ENCODE measurements at regions of chr17 and their contacts with region 1.

Region 1: GRCh38 chr17:19377602-19378392 is 501 bp upstream of the MAPK7 start:
- DNase-seq: peak; percentile 99
- ATAC-seq: peak; percentile 92
- H3K4me3 ChIP-seq: peak overlapping the region; percentile 78
- H3K27ac ChIP-seq: peak overlapping the region; percentile 84
- H3K4me1 ChIP-seq: peaks cover 15% of the 10 kb centered on the region
- H3K27me3 ChIP-seq: no peaks in the 10 kb centered on the region
- CTCF ChIP-seq: no peak

Region 2: DNA sequence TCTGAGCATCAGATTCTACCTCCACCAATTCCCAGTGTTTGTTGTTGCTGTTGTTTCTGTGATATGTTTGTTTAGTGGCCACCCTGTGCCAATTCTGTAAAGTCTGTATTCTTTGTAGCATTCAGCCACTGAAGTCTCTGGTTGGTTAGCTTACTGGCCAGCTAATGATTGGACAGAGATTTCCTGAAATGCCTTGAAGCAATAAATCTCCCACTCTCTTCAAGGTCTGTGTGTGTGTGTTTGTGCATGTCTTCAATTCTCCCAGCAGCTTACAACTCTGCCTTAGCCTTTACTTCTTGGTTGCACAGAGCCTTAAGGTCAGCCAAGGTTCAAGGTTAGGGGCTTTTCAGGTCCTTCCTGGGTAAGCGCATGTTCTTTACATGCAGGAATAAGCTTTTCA is 481.7 kb before region 1 on chr17:
- CTCF ChIA-PET with region 1: no interaction called
- POLR2A ChIA-PET with region 1: no interaction called
- intact Hi-C with region 1: no loop called
- DNase-seq: no peak
- ATAC-seq: no peak
- H3K4me3 ChIP-seq: no peak overlapping the region
- H3K27ac ChIP-seq: no peak overlapping the region
- H3K4me1 ChIP-seq: no peaks in the 10 kb centered on the region
- H3K27me3 ChIP-seq: no peaks in the 10 kb centered on the region
- CTCF ChIP-seq: no peak

Region 3: GRCh38 chr17:19336938-19337711 is 40.7 kb before region 1 on chr17:
- CTCF ChIA-PET with region 1: no interaction called
- POLR2A ChIA-PET with region 1: no interaction called
- intact Hi-C with region 1: no loop called
- DNase-seq: no peak
- ATAC-seq: no peak
- H3K4me3 ChIP-seq: no peak overlapping the region
- H3K27ac ChIP-seq: no peak overlapping the region
- H3K4me1 ChIP-seq: no peaks in the 10 kb centered on the region
- H3K27me3 ChIP-seq: no peaks in the 10 kb centered on the region
- CTCF ChIP-seq: no peak

Region 4: GRCh38 chr17:19447085-19447583 is 69.3 kb after region 1 on chr17:
- CTCF ChIA-PET with region 1: interaction called, 6 read pairs
- POLR2A ChIA-PET with region 1: interaction called, 4 read pairs
- intact Hi-C with region 1: loop called (anchors 2 kb)
- DNase-seq: peak; percentile 90
- ATAC-seq: peak; percentile 54
- H3K4me3 ChIP-seq: no peak overlapping the region
- H3K27ac ChIP-seq: no peak overlapping the region
- H3K4me1 ChIP-seq: peaks cover 11% of the 10 kb centered on the region
- H3K27me3 ChIP-seq: no peaks in the 10 kb centered on the region
- CTCF ChIP-seq: peak; percentile 95

Region 5: GRCh38 chr17:19507775-19508576 is 130.2 kb after region 1 on chr17:
- CTCF ChIA-PET with region 1: no interaction called
- POLR2A ChIA-PET with region 1: no interaction called
- intact Hi-C with region 1: loop called (anchors 5 kb)
- DNase-seq: peak; percentile 96
- ATAC-seq: peak; percentile 87
- H3K4me3 ChIP-seq: peak overlapping the region; percentile 73
- H3K27ac ChIP-seq: no peak overlapping the region
- H3K4me1 ChIP-seq: peaks cover 4% of the 10 kb centered on the region; the same call in 1 of the 2 replicates
- H3K27me3 ChIP-seq: no peaks in the 10 kb centered on the region
- CTCF ChIP-seq: no peak

Measured in PC-3 (cell line).